Activated CD4-positive, alpha-beta T cell treated with anti-CD3 and anti-CD28 coated beads for 36 hours (primary cell): ENCODE measurements at regions of chr16 and their contacts with region 1.

Region 1: DNA sequence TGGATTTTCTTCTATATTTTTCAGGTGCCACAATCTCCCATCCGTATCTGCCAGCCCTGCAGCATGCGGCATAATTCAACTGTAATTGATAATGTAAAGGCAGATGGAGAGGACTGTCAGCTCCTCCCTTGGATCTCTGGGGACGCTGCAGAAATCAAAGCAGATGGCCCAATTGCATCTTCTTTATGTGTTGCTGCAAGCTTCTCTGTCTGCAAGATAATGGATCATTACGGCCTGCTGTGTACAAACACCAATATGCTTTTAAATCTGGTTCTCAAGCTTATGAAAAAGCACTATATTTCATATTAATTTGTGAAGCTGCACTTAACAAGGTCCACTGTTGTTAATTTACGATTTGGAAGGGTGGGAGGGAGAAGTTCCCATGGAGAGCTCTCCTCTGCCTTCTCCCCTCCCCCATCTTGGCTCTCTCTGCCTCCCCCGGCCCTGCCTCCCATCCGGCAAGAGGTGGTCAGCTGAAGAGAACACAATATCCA is 607.5 kb downstream of the TOX3 start:
- DNase-seq: no peak
- ATAC-seq: no peak
- H3K4me3 Mint-ChIP-seq: no peak overlapping the region
- H3K27ac Mint-ChIP-seq: no peak overlapping the region
- H3K4me1 Mint-ChIP-seq: no peaks in the 10 kb centered on the region
- H3K27me3 Mint-ChIP-seq: no peaks in the 10 kb centered on the region

Region 2: DNA sequence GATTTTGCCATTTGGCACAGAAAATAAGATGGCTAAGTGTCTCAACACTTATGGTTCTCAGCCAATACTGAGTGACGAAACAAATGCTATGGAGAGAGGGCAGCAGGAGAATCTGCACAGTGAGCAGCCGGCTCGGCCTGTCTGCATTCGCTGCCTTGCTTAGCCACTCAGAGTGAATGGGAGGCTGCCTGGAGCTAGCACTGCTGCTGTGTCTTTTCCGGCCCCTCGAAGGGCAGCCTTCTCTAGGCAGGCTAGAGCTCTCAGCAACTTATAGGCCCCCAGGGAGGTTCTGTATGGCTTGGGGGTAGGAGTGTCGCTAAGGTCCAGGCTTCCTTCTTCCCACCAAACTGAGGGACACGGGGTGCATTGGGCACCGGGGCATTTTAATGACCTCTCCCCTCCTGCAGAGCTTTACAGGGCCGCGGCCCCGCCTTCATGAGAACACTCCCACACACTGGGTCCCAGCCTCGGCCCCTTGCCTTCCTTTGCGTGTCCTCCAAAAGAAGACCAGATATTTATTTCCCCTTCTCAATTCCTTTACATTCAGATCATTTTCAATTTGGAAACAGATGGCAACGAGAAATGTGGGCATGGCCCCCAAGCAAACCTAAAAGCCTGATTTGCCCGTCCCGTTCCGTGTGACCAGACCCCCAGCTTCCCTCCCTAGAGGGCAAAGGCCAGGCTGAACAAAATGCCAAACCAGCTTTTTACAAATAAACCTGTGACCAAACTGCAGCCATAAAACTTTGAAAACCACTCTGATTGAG is 63.4 kb before region 1 on chr16:
- CTCF ChIA-PET with region 1: no interaction called
- POLR2A ChIA-PET with region 1: no interaction called
- intact Hi-C with region 1: loop called in 1 of 2 experiments (anchors 10 kb)
- DNase-seq: no peak
- ATAC-seq: no peak
- H3K4me3 Mint-ChIP-seq: no peak overlapping the region
- H3K27ac Mint-ChIP-seq: no peak overlapping the region
- H3K4me1 Mint-ChIP-seq: no peaks in the 10 kb centered on the region
- H3K27me3 Mint-ChIP-seq: peaks cover 3% of the 10 kb centered on the region

Region 3: GRCh38 chr16:52022177-52022576 is 82.8 kb after region 1 on chr16:
- CTCF ChIA-PET with region 1: no interaction called
- POLR2A ChIA-PET with region 1: no interaction called
- intact Hi-C with region 1: no loop called
- DNase-seq: no peak
- ATAC-seq: no peak
- H3K4me3 Mint-ChIP-seq: no peak overlapping the region
- H3K27ac Mint-ChIP-seq: no peak overlapping the region
- H3K4me1 Mint-ChIP-seq: no peaks in the 10 kb centered on the region
- H3K27me3 Mint-ChIP-seq: no peaks in the 10 kb centered on the region